Caco-2 (cell line): ENCODE measurements at regions of chr7 and their contacts with region 1.

Region 1: DNA sequence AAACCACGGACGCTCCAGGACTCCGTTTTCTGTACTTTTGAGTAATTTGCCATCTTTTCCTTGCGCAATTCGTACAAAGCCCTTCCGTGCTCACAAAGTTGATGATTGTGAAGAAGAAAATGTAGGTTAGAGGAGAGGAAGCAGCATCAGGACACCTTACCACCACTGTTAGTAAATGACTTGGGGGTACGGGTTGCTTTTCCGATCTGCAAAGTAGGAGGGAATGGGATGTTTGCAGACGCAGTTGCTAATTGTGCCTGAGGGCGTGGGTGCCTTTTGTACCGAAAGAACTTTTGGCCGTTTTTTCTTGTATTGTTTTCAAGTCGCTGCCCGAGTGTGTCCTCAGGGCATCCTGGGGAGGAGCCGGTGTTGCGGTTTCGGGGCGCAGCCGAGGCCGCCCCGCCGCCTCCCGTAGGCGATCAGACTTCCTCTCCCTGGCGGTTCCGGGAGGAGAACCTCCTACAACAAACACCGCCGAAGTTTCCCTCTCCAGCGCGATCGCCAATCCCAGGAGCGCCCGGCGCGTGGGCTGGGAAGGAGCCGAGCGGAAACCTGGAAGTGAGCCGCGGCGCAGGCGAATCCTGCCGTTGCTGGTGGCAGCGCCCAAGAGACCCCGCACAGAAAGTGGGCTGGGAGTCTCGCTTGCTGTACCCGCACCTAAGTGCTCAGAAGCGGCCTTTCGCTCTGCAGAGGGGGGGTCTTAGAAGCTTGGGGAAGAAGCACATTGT is 1.0 kb downstream of the PRR15 start:
- DNase-seq: peak; percentile 62 to 63
- H3K4me3 ChIP-seq: peak overlapping the region; percentile 71
- H3K4me3 Mint-ChIP-seq: peak overlapping the region; percentile 98
- H3K27ac Mint-ChIP-seq: peak overlapping the region; percentile 93
- H3K4me1 ChIP-seq: peaks cover 23% of the 10 kb centered on the region
- H3K4me1 Mint-ChIP-seq: peaks cover 6% of the 10 kb centered on the region
- H3K27me3 ChIP-seq: no peaks in the 10 kb centered on the region
- H3K27me3 Mint-ChIP-seq: no peaks in the 10 kb centered on the region
- CTCF ChIP-seq: no peak

Region 2: DNA sequence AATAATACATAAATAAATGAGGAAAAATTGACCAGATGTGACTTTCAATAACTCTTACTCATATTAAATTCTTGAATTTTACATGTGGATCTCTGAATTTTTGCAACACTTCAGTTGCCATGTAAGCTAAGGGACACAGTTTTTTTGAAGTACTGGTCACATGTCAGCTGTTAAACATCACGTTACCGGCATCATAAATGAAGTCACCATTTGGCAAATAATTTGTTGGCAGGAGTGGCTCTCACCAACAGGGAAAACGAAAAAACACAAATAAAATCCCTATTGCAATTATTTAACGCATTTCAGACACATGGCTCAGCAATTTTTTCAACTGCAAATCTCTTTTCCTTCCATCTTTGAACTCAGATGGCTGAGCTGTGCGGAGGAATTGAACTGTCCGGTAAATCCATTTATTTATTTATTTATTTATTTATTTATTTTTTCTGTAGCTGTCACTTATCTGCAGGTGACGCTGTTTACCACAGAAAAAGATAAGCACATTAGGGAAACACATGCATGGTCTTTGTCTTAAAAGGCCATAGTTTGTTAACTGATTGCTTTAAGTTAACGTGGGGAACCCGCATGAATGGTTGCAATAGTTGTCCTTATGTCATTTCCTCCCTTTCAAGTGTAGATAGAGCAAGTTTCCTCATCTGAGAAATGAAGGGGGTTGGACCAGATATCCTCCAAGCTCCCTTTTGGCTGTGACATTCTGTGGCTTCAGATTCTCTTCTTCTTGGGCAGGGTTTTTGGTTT is 1319.4 kb before region 1 on chr7:
- CTCF ChIA-PET with region 1: no interaction called
- POLR2A ChIA-PET with region 1: interaction called, 10 read pairs
- intact Hi-C with region 1: no loop called
- DNase-seq: no peak
- H3K4me3 ChIP-seq: no peak overlapping the region
- H3K4me3 Mint-ChIP-seq: no peak overlapping the region
- H3K27ac Mint-ChIP-seq: no peak overlapping the region
- H3K4me1 ChIP-seq: no peaks in the 10 kb centered on the region
- H3K4me1 Mint-ChIP-seq: no peaks in the 10 kb centered on the region
- H3K27me3 ChIP-seq: no peaks in the 10 kb centered on the region; the same call in 1 of the 2 replicates
- H3K27me3 Mint-ChIP-seq: peaks cover 6% of the 10 kb centered on the region
- CTCF ChIP-seq: no peak

Region 3: DNA sequence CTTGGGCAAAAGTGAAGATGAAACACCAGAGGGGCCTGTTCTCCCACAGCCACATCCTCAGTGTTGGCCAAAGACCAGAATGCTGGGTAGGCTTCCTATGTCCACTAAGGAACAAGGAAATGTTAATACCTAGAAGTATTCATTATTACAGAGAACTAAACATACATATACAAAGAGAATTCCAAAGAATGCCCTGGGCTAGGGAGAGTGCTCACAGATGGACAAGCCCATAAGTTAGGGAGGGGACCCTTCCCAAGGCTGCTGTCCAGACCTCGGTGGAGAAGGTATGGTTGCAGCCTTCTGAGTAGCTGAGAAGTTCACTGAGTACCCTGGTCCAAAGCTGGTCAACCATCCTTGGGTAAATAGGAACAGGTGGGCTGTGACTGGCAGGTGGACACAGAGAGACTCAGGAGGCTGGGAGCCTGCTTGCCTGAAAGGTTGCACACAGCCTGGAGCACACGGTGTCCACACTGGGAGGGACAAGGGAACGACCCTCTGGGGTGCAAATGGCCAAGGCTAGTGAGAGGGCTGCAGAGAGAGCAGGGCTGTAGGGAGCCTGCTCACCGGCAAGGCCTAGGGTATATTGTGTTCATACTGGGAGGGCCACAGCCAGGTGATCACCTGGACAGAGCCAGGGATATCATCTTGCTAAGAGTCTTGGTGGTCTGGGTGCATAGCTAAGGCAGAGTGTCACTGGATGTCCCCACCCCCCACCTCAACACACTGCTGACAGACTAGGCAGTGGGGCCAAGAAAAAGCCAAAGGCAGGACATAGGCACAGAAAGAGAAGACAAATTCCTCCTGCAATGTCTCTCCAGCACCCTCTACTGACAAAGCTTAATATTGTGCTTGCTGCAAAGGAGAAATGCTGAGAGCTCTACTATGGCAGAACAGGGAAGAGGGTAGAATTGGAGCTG is 458.6 kb before region 1 on chr7:
- CTCF ChIA-PET with region 1: no interaction called
- POLR2A ChIA-PET with region 1: no interaction called
- intact Hi-C with region 1: loop called (anchors 5 kb)
- DNase-seq: peak; percentile 59 to 79
- H3K4me3 ChIP-seq: no peak overlapping the region
- H3K4me3 Mint-ChIP-seq: no peak overlapping the region
- H3K27ac Mint-ChIP-seq: peak overlapping the region; percentile 50
- H3K4me1 ChIP-seq: peaks cover 33% of the 10 kb centered on the region
- H3K4me1 Mint-ChIP-seq: peaks cover 47% of the 10 kb centered on the region
- H3K27me3 ChIP-seq: no peaks in the 10 kb centered on the region
- H3K27me3 Mint-ChIP-seq: no peaks in the 10 kb centered on the region
- CTCF ChIP-seq: peak; percentile 85 to 88

Region 4: GRCh38 chr7:29449569-29450271 is 114.9 kb before region 1 on chr7:
- CTCF ChIA-PET with region 1: no interaction called
- POLR2A ChIA-PET with region 1: no interaction called
- intact Hi-C with region 1: loop called (anchors 1 kb)
- DNase-seq: peak in 1 of 2 experiments; percentile 54
- H3K4me3 ChIP-seq: no peak overlapping the region
- H3K4me3 Mint-ChIP-seq: peak overlapping the region; percentile 6
- H3K27ac Mint-ChIP-seq: peak overlapping the region; percentile 90
- H3K4me1 ChIP-seq: peaks cover 28% of the 10 kb centered on the region
- H3K4me1 Mint-ChIP-seq: peaks cover 45% of the 10 kb centered on the region
- H3K27me3 ChIP-seq: no peaks in the 10 kb centered on the region
- H3K27me3 Mint-ChIP-seq: no peaks in the 10 kb centered on the region
- CTCF ChIP-seq: no peak

Region 5: GRCh38 chr7:29471444-29472138 is 93.1 kb before region 1 on chr7:
- CTCF ChIA-PET with region 1: no interaction called
- POLR2A ChIA-PET with region 1: interaction called, 5 read pairs
- intact Hi-C with region 1: loop called (anchors 5 kb)
- DNase-seq: peak; percentile 37 to 59
- H3K4me3 ChIP-seq: peak overlapping the region; percentile 1; the same call in 1 of the 2 replicates
- H3K4me3 Mint-ChIP-seq: peak overlapping the region; percentile 60
- H3K27ac Mint-ChIP-seq: peak overlapping the region; percentile 16
- H3K4me1 ChIP-seq: peaks cover 34% of the 10 kb centered on the region
- H3K4me1 Mint-ChIP-seq: peaks cover 28% of the 10 kb centered on the region
- H3K27me3 ChIP-seq: no peaks in the 10 kb centered on the region
- H3K27me3 Mint-ChIP-seq: no peaks in the 10 kb centered on the region
- CTCF ChIP-seq: no peak

Region 6: DNA sequence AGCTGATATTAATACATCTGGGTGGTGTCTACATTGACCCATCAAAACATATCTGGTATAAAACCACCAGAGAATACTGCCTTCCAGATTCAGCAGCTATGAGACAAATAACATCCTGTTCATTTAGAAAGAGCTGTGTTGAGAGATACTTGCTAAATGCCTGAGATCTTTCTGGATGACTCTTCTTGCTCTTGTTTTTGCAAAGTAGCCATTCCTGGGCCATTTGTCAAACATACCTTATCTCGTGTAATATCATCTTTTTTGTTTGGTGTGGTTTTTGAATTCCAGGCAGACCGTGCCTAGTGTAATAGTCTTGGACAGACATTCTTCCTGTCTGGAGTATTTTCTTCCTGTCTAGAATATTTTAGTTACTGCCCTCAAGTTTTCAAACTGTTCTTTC is 75.7 kb before region 1 on chr7:
- CTCF ChIA-PET with region 1: no interaction called
- POLR2A ChIA-PET with region 1: no interaction called
- intact Hi-C with region 1: loop called (anchors 5 kb)
- DNase-seq: peak in 1 of 2 experiments; percentile 15
- H3K4me3 ChIP-seq: no peak overlapping the region
- H3K4me3 Mint-ChIP-seq: no peak overlapping the region
- H3K27ac Mint-ChIP-seq: no peak overlapping the region
- H3K4me1 ChIP-seq: peaks cover 32% of the 10 kb centered on the region
- H3K4me1 Mint-ChIP-seq: peaks cover 29% of the 10 kb centered on the region
- H3K27me3 ChIP-seq: no peaks in the 10 kb centered on the region
- H3K27me3 Mint-ChIP-seq: no peaks in the 10 kb centered on the region
- CTCF ChIP-seq: no peak

Region 7: GRCh38 chr7:29609162-29610037 is 44.7 kb after region 1 on chr7:
- CTCF ChIA-PET with region 1: interaction called, 3 read pairs
- POLR2A ChIA-PET with region 1: interaction called, 3 read pairs
- intact Hi-C with region 1: loop called (anchors 1 kb)
- DNase-seq: peak; percentile 71 to 82
- H3K4me3 ChIP-seq: 0 out of 2 replicates have a peak overlapping the region, but pooled peaks have one; percentile 10
- H3K4me3 Mint-ChIP-seq: peak overlapping the region; percentile 73
- H3K27ac Mint-ChIP-seq: peak overlapping the region; percentile 84
- H3K4me1 ChIP-seq: peaks cover 46% of the 10 kb centered on the region
- H3K4me1 Mint-ChIP-seq: peaks cover 44% of the 10 kb centered on the region
- H3K27me3 ChIP-seq: no peaks in the 10 kb centered on the region
- H3K27me3 Mint-ChIP-seq: no peaks in the 10 kb centered on the region
- CTCF ChIP-seq: peak; percentile 75